ENCODE measurements at regions of chr11 and their contacts with region 1.

Region 1: DNA sequence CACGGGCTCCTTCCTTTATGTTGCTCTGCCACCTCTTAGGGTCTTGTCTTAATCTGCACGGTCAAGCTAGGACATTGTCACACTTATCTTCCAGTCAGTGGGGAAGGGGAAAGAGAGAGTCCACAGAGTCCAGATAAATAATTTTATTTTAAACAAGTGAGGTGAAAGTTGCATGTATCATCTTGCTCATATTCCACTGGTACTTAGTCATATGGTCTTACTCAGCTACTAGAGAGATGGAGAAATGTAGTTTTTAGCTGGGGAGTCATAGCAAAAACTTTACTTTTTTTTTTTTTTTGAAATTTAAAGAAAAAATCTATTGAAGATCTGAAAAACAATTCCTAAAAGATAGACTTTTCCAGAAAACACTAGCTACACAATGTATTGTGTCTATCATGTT is 29.0 kb downstream of the PDE3B start:
- DNase-seq: no peak
- H3K4me3 ChIP-seq: no peak overlapping the region
- H3K27ac ChIP-seq: peak overlapping the region in 3 of 4 donors; percentile 35 to 46 (median 42)
- H3K4me1 ChIP-seq: peaks cover 0 to 31% (median 9%) of the 10 kb centered on the region in 4 donors
- H3K27me3 ChIP-seq: no peaks in the 10 kb centered on the region
- CTCF ChIP-seq: no peak
- EP300 ChIP-seq: no peak
- POLR2A ChIP-seq: no peak

Region 2: GRCh38 chr11:14764579-14765527 is 92.2 kb after region 1 on chr11:
- intact Hi-C with region 1: loop called (anchors 10 kb)
- DNase-seq: no peak
- H3K4me3 ChIP-seq: no peak overlapping the region
- H3K27ac ChIP-seq: no peak overlapping the region
- H3K4me1 ChIP-seq: peaks cover 0 to 65% (median 29%) of the 10 kb centered on the region in 4 donors
- H3K27me3 ChIP-seq: no peaks in the 10 kb centered on the region
- CTCF ChIP-seq: no peak
- EP300 ChIP-seq: no peak
- POLR2A ChIP-seq: no peak

Region 3: GRCh38 chr11:14872032-14872431 is 199.4 kb after region 1 on chr11:
- intact Hi-C with region 1: no loop called
- DNase-seq: no peak
- H3K4me3 ChIP-seq: no peak overlapping the region
- H3K27ac ChIP-seq: no peak overlapping the region
- H3K4me1 ChIP-seq: peaks cover 0 to 3% (median 0%) of the 10 kb centered on the region in 4 donors
- H3K27me3 ChIP-seq: no peaks in the 10 kb centered on the region
- CTCF ChIP-seq: no peak
- EP300 ChIP-seq: no peak
- POLR2A ChIP-seq: no peak

Measured in sigmoid colon (tissue), 7 donors.